Naive thymus-derived CD4-positive, alpha-beta T cell (primary cell): ENCODE measurements at regions of chr1 and their contacts with region 1.

Region 1: DNA sequence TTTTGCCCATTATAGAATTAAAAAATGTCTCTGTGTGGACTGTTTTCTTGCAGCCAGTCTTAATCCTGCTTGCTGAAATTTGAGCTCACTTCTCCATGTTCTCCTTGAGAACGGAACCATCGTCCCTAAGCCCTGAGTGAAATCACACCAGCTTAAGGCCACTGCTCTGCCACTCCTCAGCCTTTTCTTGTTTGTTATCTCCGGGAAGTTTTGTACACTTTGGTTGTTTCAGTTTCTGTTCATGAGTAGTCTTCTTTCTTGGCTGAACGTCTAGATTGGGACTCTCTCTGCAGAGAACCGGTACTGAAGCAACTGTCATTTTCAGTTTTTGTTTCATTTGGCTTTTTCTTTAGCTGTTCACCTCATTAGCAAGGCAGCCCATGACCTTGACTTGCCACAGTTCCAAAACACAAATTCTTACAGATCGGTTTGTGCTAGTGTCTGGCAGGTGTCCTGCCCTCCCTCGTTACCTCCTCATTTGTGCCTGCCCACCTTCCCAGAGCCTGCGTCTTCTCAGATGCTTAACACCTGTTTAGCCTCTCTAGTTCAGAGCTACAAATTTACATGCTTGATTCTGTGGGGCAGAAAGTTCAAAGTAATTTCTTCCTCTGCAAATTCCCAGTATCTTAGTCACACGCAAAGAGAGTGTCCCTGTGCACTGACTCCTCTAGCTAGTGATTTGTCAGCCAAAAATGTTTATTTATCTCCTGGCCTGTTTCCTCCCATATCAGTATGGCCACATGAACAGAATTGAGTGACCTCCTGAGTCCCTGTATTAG is 12.4 kb downstream of the PSEN2 start:
- DNase-seq: peak in 8 of 9 donors; percentile 31 to 65 (median 52)
- ATAC-seq: peak; percentile 79
- H3K4me3 ChIP-seq: peak overlapping the region; percentile 48
- H3K4me3 Mint-ChIP-seq: peak overlapping the region; percentile 65 to 88 (median 80)
- H3K27ac ChIP-seq: peak overlapping the region; percentile 73
- H3K27ac Mint-ChIP-seq: peak overlapping the region; percentile 85 to 98 (median 91)
- H3K4me1 ChIP-seq: peaks cover 4 to 34% of the 10 kb centered on the region in 2 donors
- H3K4me1 Mint-ChIP-seq: peaks cover 44 to 57% (median 51%) of the 10 kb centered on the region in 7 donors
- H3K27me3 ChIP-seq: no peaks in the 10 kb centered on the region
- H3K27me3 Mint-ChIP-seq: no peaks in the 10 kb centered on the region

Region 2: DNA sequence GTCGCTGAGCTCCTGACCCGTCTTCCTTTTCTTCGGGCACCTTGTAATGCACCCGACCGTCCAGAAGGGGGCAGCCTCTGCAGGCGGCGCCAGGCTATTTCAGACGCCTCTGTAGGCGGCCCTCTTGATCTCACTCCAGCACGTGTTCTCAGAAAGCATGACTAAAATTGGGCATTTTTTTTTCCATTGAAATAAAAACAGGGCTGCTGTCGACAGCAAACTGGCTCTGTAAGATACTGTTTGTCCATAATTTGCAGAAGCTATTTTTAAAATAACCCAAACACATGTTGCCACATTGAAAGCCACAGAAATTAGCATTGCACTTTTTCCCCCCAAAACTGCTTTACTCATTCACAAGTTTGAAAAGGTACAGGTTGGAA is 256.3 kb before region 1 on chr1:
- CTCF ChIA-PET with region 1: no interaction called
- POLR2A ChIA-PET with region 1: interaction called, 5 read pairs
- intact Hi-C with region 1: loop called in 1 of 2 experiments (anchors 2 kb)
- DNase-seq: peak; percentile 62 to 85 (median 76)
- ATAC-seq: peak; percentile 97
- H3K4me3 ChIP-seq: peak overlapping the region; percentile 25
- H3K4me3 Mint-ChIP-seq: peak overlapping the region; percentile 29 to 72 (median 56)
- H3K27ac ChIP-seq: no peak overlapping the region
- H3K27ac Mint-ChIP-seq: peak overlapping the region in 7 of 9 donors; percentile 43 to 85 (median 67)
- H3K4me1 ChIP-seq: peaks cover 8 to 10% of the 10 kb centered on the region in 2 donors
- H3K4me1 Mint-ChIP-seq: peaks cover 9 to 33% (median 27%) of the 10 kb centered on the region in 7 donors
- H3K27me3 ChIP-seq: no peaks in the 10 kb centered on the region
- H3K27me3 Mint-ChIP-seq: peaks cover 0 to 8% (median 0%) of the 10 kb centered on the region in 5 donors

Region 3: DNA sequence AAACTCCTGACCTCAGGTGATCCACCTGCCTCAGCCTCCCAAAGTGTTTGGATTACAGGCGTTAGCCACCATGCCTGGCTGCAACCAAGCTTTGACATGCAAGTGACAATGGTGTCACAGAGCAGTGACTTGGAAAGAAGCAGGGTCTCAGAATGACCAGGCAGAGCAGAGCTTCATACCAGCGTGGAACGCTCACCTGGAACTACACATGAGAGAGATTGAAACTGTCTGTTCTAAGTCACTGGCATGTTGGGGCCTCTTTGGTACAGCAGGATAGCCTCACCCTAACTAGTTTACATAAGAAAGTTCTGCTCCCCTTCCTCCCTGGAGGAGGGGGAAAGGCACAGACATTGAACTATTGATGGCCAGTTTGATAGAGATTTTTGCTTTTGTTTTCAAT is 96.3 kb before region 1 on chr1:
- CTCF ChIA-PET with region 1: no interaction called
- POLR2A ChIA-PET with region 1: no interaction called
- intact Hi-C with region 1: no loop called
- DNase-seq: no peak
- ATAC-seq: no peak
- H3K4me3 ChIP-seq: no peak overlapping the region
- H3K4me3 Mint-ChIP-seq: no peak overlapping the region
- H3K27ac ChIP-seq: no peak overlapping the region
- H3K27ac Mint-ChIP-seq: no peak overlapping the region
- H3K4me1 ChIP-seq: no peaks in the 10 kb centered on the region
- H3K4me1 Mint-ChIP-seq: peaks cover 0 to 6% (median 0%) of the 10 kb centered on the region in 7 donors
- H3K27me3 ChIP-seq: no peaks in the 10 kb centered on the region
- H3K27me3 Mint-ChIP-seq: peaks cover 0 to 19% (median 0%) of the 10 kb centered on the region in 5 donors

Region 4: DNA sequence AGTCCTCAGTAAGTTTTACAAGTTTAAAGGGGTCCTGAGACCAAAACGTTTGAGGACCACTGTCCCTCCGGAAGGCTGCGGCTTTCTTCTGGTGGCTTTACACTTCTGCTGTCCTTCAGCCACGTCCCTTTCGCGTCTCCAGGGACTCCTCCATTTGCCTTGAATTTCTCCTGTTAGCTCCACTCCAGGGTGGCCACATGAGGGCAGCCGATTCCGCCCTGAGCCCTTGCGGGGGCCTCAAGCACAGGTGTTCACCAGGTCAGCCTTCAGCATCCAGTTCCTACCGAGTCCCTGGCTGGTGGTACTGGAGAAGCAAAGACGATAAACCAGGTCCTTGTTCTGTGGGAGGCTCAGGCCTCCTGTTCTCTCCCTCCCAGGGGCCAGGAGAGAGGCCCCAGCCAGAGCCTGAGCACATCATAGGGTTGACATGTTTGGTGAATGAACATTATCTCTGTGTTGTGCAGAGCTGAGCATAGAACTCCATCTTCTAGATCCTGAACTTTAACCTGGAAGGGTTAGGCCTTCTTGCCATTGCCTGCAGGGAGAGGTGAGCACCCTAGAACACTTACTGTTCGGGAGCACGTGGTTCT is 29.9 kb after region 1 on chr1:
- CTCF ChIA-PET with region 1: interaction called, 6 read pairs
- POLR2A ChIA-PET with region 1: interaction called, 6 read pairs
- intact Hi-C with region 1: loop called (anchors 2 to 5 kb)
- DNase-seq: peak in 7 of 9 donors; percentile 16 to 43 (median 29)
- ATAC-seq: peak; percentile 67
- H3K4me3 ChIP-seq: no peak overlapping the region
- H3K4me3 Mint-ChIP-seq: peak overlapping the region in 1 of 10 donors; percentile 10
- H3K27ac ChIP-seq: no peak overlapping the region
- H3K27ac Mint-ChIP-seq: peak overlapping the region in 2 of 9 donors; percentile 28 to 64
- H3K4me1 ChIP-seq: no peaks in the 10 kb centered on the region
- H3K4me1 Mint-ChIP-seq: peaks cover 0 to 18% (median 0%) of the 10 kb centered on the region in 7 donors
- H3K27me3 ChIP-seq: no peaks in the 10 kb centered on the region
- H3K27me3 Mint-ChIP-seq: no peaks in the 10 kb centered on the region